ENCODE measurements at regions of chr12 and their contacts with region 1.

Region 1: DNA sequence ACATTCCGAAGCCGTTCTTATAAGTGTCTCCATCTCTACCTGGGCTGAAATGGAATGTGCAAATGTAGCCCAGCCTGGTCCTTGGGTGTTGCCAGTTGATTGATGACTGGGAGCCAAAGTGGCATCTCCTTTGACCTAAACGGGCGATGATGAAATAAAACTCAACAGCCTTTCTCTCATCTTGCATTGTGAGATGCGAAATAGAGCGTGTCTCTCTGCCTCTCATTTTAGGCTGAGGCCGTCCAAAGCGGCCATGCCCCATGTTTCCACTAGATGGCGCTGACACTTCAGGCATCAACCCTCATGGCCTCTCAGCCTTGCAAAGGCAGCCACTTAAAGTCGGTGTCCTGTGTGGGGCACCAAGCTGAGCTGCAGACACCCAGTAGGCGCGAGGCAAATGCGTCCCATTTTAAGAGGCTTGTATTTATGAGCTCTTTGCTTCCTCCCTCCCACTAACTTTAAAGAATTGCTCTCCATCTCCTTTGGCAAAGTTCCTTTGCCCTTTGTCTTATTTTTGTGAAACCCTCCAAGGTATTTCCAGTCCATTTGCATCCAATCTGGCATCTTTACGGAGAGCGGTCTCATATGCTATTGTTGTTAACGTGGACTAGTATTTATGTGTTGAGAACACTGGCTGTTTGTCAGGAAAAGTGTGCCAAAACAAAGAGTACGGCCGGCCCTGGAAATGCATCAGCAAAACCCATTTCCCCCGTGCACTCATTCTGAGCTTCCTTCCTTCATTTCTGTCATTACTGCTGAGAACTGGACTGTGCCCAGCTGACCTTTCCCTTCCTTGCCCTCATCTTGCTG is 25.0 kb downstream of the GPRC5A start:
- DNase-seq: peak; percentile 76
- H3K4me3 Mint-ChIP-seq: no peak overlapping the region
- H3K27ac Mint-ChIP-seq: no peak overlapping the region
- H3K4me1 Mint-ChIP-seq: peaks cover 10% of the 10 kb centered on the region
- H3K27me3 Mint-ChIP-seq: peaks cover 18% of the 10 kb centered on the region

Region 2: DNA sequence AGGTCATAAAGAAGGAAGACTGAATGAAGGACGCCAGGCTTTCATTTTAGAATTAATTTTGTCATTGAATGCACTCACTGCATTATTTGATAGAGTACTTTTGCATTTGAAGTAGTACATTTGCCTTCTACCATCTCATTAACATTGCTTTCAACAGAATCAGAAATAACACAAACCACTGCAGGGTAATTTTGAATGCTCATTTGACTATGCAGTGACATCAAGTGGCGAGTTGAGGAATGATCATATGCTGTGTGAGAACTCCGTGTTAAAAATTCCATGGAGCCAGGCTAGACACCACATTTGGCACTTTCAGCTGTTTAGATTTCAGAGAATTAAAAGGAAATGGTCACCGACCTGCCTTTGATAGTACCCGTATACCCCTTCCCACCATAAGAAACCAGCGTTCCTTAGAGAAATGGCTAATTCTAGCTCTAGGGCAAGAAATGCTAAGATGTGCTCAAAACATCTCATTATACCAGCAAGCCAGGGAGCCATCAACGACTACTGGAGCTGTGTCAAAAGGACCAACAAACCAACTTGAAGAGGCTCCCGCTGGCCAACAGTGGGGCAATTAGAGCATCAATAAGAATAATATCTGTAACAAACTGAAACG is 67.2 kb after region 1 on chr12:
- intact Hi-C with region 1: loop called (anchors 1 kb)
- DNase-seq: no peak
- H3K4me3 Mint-ChIP-seq: no peak overlapping the region
- H3K27ac Mint-ChIP-seq: no peak overlapping the region
- H3K4me1 Mint-ChIP-seq: no peaks in the 10 kb centered on the region
- H3K27me3 Mint-ChIP-seq: no peaks in the 10 kb centered on the region

Region 3: GRCh38 chr12:13100882-13101769 is 184.8 kb after region 1 on chr12:
- intact Hi-C with region 1: loop called (anchors 2 kb)
- DNase-seq: peak; percentile 89
- H3K4me3 Mint-ChIP-seq: peak overlapping the region; percentile 71
- H3K27ac Mint-ChIP-seq: peak overlapping the region; percentile 75
- H3K4me1 Mint-ChIP-seq: peaks cover 47% of the 10 kb centered on the region
- H3K27me3 Mint-ChIP-seq: peaks cover 5% of the 10 kb centered on the region

Region 4: DNA sequence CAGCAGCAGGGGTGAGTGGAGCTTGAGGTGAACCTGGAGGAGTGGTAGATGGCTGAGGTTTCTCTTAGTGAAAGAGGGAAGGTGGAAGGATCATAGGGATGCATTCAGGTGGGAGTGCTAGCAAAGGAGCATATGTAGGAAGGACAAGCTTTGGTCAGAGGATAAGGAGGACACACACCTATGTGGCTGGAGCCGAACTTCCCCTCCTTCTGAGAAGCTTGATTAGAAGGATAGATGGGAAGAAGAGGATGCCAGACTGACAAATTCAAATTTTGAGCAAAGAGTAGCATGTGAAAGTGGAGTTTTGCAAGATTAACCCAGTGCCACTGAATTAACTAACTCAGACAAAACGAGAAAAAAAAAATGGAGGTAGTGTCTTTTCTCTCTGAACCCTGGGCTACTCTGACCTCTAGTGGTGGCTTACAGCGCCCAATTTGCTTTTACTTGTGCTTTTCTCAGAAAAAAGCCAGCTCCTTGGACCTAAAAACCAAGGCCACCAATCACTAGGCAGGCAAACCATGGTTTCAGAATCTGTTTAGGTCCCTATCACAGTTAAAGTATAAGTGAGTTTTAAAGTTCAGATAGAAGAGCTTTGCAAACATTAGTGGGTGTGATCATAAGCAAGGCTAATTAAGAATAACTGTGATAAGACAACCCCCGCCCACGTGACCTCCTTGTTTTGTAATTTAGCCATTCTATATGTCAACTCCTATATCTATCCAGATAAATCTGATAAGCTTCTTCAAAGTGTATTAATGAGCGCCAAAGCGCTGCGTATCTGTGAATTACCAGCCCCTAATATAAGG is 295.7 kb after region 1 on chr12:
- intact Hi-C with region 1: loop called (anchors 1 kb)
- DNase-seq: peak; percentile 58
- H3K4me3 Mint-ChIP-seq: no peak overlapping the region
- H3K27ac Mint-ChIP-seq: no peak overlapping the region
- H3K4me1 Mint-ChIP-seq: peaks cover 26% of the 10 kb centered on the region
- H3K27me3 Mint-ChIP-seq: peaks cover 1% of the 10 kb centered on the region

Region 5: GRCh38 chr12:13233830-13234641 is 317.7 kb after region 1 on chr12:
- intact Hi-C with region 1: loop called (anchors 1 kb)
- DNase-seq: no peak
- H3K4me3 Mint-ChIP-seq: no peak overlapping the region
- H3K27ac Mint-ChIP-seq: no peak overlapping the region
- H3K4me1 Mint-ChIP-seq: no peaks in the 10 kb centered on the region
- H3K27me3 Mint-ChIP-seq: peaks cover 8% of the 10 kb centered on the region

Region 6: DNA sequence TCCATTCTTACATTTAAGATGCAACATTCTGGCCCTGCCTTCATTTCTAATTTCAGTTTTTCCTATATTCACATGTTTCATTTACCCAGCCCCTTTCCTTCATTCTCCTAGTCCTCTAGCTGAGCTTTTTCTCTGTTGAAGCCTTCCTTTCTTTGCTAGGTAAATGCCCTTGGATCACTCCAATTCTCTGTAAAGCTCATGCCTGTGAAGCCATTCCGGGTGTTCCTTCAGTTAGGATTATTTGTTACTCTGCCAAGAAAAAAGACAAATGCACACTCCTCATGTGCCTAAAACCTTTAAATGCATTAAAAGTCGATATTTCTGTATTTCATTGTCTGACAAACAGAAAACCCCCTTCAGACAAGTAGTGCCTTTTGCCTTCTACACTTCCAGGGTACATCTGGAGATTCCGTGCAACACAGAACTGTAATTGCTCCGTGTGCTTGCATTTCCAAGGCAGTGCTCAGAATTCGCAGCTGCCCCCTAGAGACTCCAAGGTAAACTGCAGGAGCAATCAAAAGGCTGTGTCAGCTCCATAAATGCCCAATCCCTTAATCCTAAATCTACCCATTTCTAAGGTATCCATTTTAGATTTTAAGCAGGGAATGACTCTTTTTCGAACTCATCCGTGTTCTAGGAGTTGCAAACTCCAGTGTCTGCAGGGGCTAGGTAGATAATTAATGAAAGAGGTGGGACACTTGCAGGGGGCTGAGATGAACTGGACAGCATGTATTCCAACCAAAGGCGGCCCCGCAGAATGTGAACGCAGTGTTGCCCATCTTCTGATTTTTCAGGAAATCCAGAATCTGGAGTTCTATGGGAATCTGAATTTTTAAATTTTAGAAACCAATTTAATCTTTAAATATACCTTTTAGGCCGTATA is 744.9 kb after region 1 on chr12:
- intact Hi-C with region 1: loop called (anchors 2 kb)
- DNase-seq: no peak
- H3K4me3 Mint-ChIP-seq: no peak overlapping the region
- H3K27ac Mint-ChIP-seq: no peak overlapping the region
- H3K4me1 Mint-ChIP-seq: no peaks in the 10 kb centered on the region
- H3K27me3 Mint-ChIP-seq: peaks cover 1% of the 10 kb centered on the region